BJ (cell line): ENCODE measurements at regions of chr5 and their contacts with region 1.

Region 1: GRCh38 chr5:151509231-151509630 is 61.8 kb downstream of the SLC36A1 start:
- DNase-seq: no peak
- H3K4me3 ChIP-seq: no peak overlapping the region
- H3K27me3 ChIP-seq: no peaks in the 10 kb centered on the region
- CTCF ChIP-seq: no peak

Region 2: GRCh38 chr5:151030400-151030799 is 478.8 kb before region 1 on chr5:
- CTCF ChIA-PET with region 1: no interaction called
- POLR2A ChIA-PET with region 1: no interaction called
- DNase-seq: no peak
- H3K4me3 ChIP-seq: no peak overlapping the region
- H3K27me3 ChIP-seq: no peaks in the 10 kb centered on the region
- CTCF ChIP-seq: no peak

Region 3: DNA sequence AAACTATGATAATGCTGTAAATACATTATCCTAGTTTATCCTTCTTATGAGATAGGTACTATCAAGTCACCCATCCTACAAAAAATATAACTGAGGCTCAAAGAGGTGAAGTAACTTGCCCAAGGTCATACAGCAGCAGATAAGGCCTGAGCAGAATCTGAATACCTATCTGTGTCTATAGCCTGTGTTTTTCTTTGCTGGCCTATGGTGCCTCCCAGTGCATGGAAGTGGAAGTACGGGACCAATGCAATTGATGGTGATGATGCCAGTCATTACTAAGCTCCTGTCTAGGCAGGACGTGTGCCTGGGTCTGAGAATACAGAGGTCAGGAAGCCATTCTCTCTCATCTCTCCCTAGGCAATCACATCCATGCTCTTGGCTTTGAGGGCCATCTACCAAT is 14.1 kb after region 1 on chr5:
- CTCF ChIA-PET with region 1: interaction called, 16 read pairs
- POLR2A ChIA-PET with region 1: no interaction called
- DNase-seq: no peak
- H3K4me3 ChIP-seq: no peak overlapping the region
- H3K27me3 ChIP-seq: no peaks in the 10 kb centered on the region
- CTCF ChIP-seq: peak; percentile 65

Region 4: GRCh38 chr5:151585970-151586369 is 76.7 kb after region 1 on chr5:
- CTCF ChIA-PET with region 1: no interaction called
- POLR2A ChIA-PET with region 1: no interaction called
- DNase-seq: no peak
- H3K4me3 ChIP-seq: no peak overlapping the region
- H3K27me3 ChIP-seq: peaks cover 2% of the 10 kb centered on the region
- CTCF ChIP-seq: no peak

Region 5: DNA sequence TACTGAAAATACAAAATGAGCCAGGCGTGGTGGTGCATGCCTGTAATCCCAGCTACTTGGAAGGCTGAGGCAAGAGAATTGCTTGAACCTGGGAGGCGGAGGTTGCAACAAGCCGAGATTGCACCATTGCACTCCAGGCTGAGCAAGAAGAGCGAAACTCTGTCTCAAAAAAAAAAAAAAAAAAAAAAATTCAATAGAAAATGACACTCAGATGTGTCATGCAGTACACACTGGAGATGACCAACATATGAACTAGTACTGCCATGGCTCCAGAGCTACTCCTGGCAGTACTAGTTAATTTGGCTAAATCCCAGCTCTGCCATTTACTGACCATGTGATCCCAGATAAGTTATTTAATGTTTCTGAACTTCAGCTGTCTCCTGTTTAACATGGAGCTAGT is 241.9 kb after region 1 on chr5:
- CTCF ChIA-PET with region 1: no interaction called
- POLR2A ChIA-PET with region 1: no interaction called
- DNase-seq: no peak
- H3K4me3 ChIP-seq: no peak overlapping the region
- H3K27me3 ChIP-seq: no peaks in the 10 kb centered on the region
- CTCF ChIP-seq: no peak